Left ventricle myocardium superior (tissue), 1 donor: ENCODE measurements at regions of chr16 and their contacts with region 1.

Region 1: GRCh38 chr16:77171745-77172635 is 19.0 kb upstream of the MON1B start:
- DNase-seq: no peak
- ATAC-seq: peak; percentile 64

Region 2: DNA sequence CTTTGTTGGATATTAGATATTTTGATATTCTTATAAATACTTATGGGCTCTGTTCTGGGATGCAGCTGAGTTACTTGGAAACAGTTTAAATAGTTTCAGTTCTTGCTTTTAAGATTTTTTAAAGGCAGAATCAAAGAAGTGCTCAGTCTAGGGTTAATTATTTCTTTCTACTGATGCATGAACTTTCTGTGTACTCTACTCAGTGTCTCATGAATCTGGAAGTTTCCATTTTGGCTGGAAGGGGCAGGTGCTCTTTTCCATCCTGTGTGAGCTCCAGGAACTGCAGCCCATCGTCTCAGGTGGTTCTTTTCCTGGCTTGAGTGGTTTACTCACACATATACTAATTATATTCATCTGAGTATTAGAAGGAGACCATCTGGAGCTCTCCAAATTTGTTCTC is 1384.5 kb before region 1 on chr16:
- intact Hi-C with region 1: loop called (anchors 2 kb)
- DNase-seq: no peak
- ATAC-seq: no peak

Region 3: DNA sequence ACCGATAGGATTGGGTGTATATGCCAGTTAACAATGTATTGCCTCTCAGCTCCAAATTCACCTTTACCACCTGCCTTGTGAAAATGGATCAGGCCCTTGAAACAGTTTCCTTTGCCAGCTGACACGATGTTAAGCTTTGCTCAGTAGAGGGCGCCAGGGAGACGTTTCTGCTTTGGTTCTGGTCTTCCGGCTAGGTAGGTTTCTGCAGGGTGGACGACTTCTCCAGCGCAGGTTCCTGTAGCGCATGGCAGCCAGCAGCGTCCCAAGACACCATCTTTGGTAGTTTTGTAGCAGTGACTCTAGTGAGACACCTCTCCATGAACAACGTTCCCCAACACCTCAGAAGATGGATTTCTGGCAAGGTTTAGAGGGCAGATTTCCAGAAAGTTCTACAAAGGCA is 51.2 kb after region 1 on chr16:
- intact Hi-C with region 1: no loop called
- DNase-seq: no peak
- ATAC-seq: no peak

Region 4: GRCh38 chr16:77327717-77328116 is 155.7 kb after region 1 on chr16:
- intact Hi-C with region 1: no loop called
- DNase-seq: no peak
- ATAC-seq: no peak